Panc1 (cell line): ENCODE measurements at regions of chr2 and their contacts with region 1.

Region 1: GRCh38 chr2:61268249-61268648 is 106.3 kb downstream of the C2orf74 start:
- DNase-seq: no peak
- ATAC-seq: no peak
- H3K4me3 ChIP-seq: no peak overlapping the region
- H3K27ac ChIP-seq: no peak overlapping the region
- H3K4me1 ChIP-seq: no peaks in the 10 kb centered on the region
- H3K27me3 ChIP-seq: no peaks in the 10 kb centered on the region
- CTCF ChIP-seq: no peak

Region 2: DNA sequence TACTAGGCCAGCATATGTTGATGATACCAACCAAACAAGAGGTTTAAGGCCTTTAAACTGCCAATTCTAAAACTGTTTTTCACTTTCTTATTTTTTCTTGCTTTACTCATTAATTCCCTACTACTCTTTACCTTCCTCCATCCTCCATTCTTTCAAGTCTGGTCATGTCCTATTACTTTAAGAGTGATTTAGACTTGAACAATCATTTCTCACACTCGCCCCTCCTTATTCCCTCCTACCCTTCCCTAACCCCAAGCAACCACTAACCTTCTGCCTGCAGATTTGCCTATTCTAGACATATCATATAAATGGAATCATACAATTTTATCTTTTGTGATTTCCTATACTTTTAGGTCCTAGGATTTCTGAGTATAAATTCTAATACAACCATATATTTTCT is 74.9 kb after region 1 on chr2:
- CTCF ChIA-PET with region 1: interaction called, 10 read pairs
- POLR2A ChIA-PET with region 1: no interaction called
- in situ Hi-C with region 1: no loop called
- intact Hi-C with region 1: no loop called
- DNase-seq: no peak
- ATAC-seq: no peak
- H3K4me3 ChIP-seq: no peak overlapping the region
- H3K27ac ChIP-seq: no peak overlapping the region
- H3K4me1 ChIP-seq: no peaks in the 10 kb centered on the region
- H3K27me3 ChIP-seq: no peaks in the 10 kb centered on the region
- CTCF ChIP-seq: no peak